ENCODE measurements at regions of chr6 and their contacts with region 1.

Region 1: GRCh38 chr6:157240059-157240959 is 83.0 kb downstream of the TMEM242 start:
- DNase-seq: peak; percentile 74 to 94
- H3K4me3 ChIP-seq: no peak overlapping the region
- CTCF ChIP-seq: no peak
- POLR2A ChIP-seq: no peak

Region 2: GRCh38 chr6:156057869-156058268 is 1182.4 kb before region 1 on chr6:
- intact Hi-C with region 1: loop called (anchors 10 kb)
- DNase-seq: no peak
- H3K4me3 ChIP-seq: no peak overlapping the region
- CTCF ChIP-seq: no peak
- POLR2A ChIP-seq: no peak

Measured in lower leg skin (tissue), 4 donors.